PC-3 (cell line): ENCODE measurements at regions of chr1 and their contacts with region 1.

Region 1: GRCh38 chr1:182962554-182963115 is 9.7 kb upstream of the SHCBP1L start:
- DNase-seq: peak; percentile 80
- ATAC-seq: peak; percentile 100
- H3K4me3 ChIP-seq: peak overlapping the region; percentile 60
- H3K27ac ChIP-seq: peak overlapping the region; percentile 43
- H3K4me1 ChIP-seq: peaks cover 5% of the 10 kb centered on the region
- H3K27me3 ChIP-seq: no peaks in the 10 kb centered on the region
- CTCF ChIP-seq: peak; percentile 90

Region 2: DNA sequence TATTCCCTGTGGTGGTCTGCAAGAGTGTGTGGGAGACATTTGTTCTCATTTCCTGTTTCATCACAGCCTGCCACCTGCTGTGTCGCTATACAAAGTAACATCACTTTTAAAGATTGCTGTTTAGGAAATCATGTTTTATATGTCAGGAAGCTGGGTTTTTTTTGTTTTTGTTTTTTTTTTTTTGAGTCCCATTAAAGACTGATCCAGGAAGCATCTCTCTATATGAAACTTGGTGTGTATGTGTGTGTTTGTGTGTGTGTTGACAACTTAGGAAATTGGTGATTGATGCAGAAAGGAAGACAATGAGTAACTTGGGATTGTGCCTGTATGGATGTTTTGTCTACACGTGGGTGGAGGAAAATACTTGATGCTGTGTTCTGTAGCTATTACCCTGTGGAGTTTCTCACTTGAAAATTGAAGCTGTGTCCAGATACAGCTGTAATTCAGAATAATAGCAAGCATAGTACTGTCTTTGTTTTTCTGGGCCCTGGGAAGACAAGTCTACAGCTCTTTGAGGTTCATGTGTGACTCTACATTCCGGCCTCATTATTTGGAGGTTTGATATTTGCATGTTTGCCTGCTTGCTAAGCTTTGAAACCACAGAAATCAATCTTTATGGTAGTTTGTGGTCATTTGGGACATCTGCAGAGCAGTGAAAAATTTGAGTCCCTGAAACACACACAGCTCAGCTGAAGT is 108.4 kb after region 1 on chr1:
- CTCF ChIA-PET with region 1: interaction called, 4 read pairs
- POLR2A ChIA-PET with region 1: no interaction called
- intact Hi-C with region 1: loop called (anchors 10 kb)
- DNase-seq: peak; percentile 69
- ATAC-seq: peak; percentile 43
- H3K4me3 ChIP-seq: 0 out of 2 replicates have a peak overlapping the region, but pooled peaks have one; percentile 26
- H3K27ac ChIP-seq: peak overlapping the region; percentile 96
- H3K4me1 ChIP-seq: peaks cover 46% of the 10 kb centered on the region
- H3K27me3 ChIP-seq: no peaks in the 10 kb centered on the region
- CTCF ChIP-seq: no peak